Mammary epithelial cell (primary cell): ENCODE measurements at regions of chr20 and their contacts with region 1.

Region 1: GRCh38 chr20:6636209-6637159 is 131.0 kb upstream of the BMP2 start:
- DNase-seq: peak; percentile 64
- H3K4me3 ChIP-seq: no peak overlapping the region
- H3K27ac ChIP-seq: no peak overlapping the region
- H3K4me1 ChIP-seq: peaks cover 16% of the 10 kb centered on the region
- H3K27me3 ChIP-seq: no peaks in the 10 kb centered on the region
- CTCF ChIP-seq: peak; percentile 65 to 74

Region 2: GRCh38 chr20:6265204-6265904 is 371.1 kb before region 1 on chr20:
- CTCF ChIA-PET with region 1: no interaction called
- dilution Hi-C with region 1: no loop called
- in situ Hi-C with region 1: no loop called
- intact Hi-C with region 1: loop called (anchors 1 kb)
- DNase-seq: peak; percentile 41
- H3K4me3 ChIP-seq: peak overlapping the region in 2 of 3 experiments; percentile 17 to 35
- H3K27ac ChIP-seq: peak overlapping the region; percentile 10
- H3K4me1 ChIP-seq: peaks cover 9% of the 10 kb centered on the region
- H3K27me3 ChIP-seq: no peaks in the 10 kb centered on the region
- CTCF ChIP-seq: peak; percentile 65 to 70

Region 3: DNA sequence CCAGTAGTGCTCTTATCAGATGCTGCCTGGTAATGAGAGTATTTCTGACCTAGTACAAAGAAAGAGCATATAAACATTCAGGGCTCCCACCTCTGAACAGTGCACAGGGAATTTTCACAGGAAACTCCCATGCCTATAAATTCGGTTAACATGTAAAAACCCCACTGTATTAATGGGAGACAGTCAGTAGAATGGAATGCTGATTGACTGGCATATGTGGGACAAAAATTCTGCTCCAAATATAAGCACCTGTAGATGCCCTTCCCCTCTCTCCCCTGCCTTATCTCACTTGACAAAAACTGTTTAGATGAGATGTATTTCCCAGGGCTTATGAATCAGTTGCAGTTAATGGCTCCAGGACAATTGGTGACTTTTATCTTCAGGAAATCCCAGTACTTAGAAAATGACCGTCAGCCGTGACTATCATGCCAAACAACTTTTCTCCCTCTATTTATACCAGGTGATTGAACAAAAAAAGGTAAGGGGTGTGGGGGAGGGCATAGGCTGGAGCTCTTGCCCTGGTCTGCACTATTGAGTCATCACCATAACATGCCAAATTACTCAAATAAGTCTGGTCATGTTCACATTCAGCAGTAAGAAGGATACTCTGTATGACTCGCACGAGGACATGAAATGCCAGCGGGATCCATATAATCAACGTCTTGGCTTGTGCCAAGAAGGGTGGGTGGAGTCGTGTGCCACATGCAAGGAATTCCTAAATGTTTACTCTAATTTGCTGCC is 45.4 kb before region 1 on chr20:
- CTCF ChIA-PET with region 1: no interaction called
- dilution Hi-C with region 1: no loop called
- in situ Hi-C with region 1: no loop called
- intact Hi-C with region 1: loop called (anchors 2 kb)
- DNase-seq: peak; percentile 99
- H3K4me3 ChIP-seq: no peak overlapping the region
- H3K27ac ChIP-seq: peak overlapping the region; percentile 96
- H3K4me1 ChIP-seq: peaks cover 22% of the 10 kb centered on the region
- H3K27me3 ChIP-seq: no peaks in the 10 kb centered on the region
- CTCF ChIP-seq: no peak

Region 4: GRCh38 chr20:6802227-6802626 is 165.7 kb after region 1 on chr20:
- CTCF ChIA-PET with region 1: no interaction called
- dilution Hi-C with region 1: loop called (anchors 5 kb)
- in situ Hi-C with region 1: no loop called
- intact Hi-C with region 1: no loop called
- DNase-seq: peak; percentile 36
- H3K4me3 ChIP-seq: no peak overlapping the region
- H3K27ac ChIP-seq: no peak overlapping the region
- H3K4me1 ChIP-seq: no peaks in the 10 kb centered on the region
- H3K27me3 ChIP-seq: no peaks in the 10 kb centered on the region
- CTCF ChIP-seq: no peak

Region 5: GRCh38 chr20:6940046-6940445 is 303.6 kb after region 1 on chr20:
- CTCF ChIA-PET with region 1: no interaction called
- dilution Hi-C with region 1: no loop called
- in situ Hi-C with region 1: loop called in 1 of 2 experiments (anchors 25 kb)
- intact Hi-C with region 1: no loop called
- DNase-seq: peak; percentile 1
- H3K4me3 ChIP-seq: no peak overlapping the region
- H3K27ac ChIP-seq: no peak overlapping the region
- H3K4me1 ChIP-seq: peaks cover 6% of the 10 kb centered on the region
- H3K27me3 ChIP-seq: no peaks in the 10 kb centered on the region
- CTCF ChIP-seq: peak; percentile 85 to 88

Region 6: GRCh38 chr20:7272512-7272911 is 636.0 kb after region 1 on chr20:
- CTCF ChIA-PET with region 1: no interaction called
- dilution Hi-C with region 1: no loop called
- in situ Hi-C with region 1: no loop called
- intact Hi-C with region 1: loop called (anchors 5 kb)
- DNase-seq: no peak
- H3K4me3 ChIP-seq: no peak overlapping the region
- H3K27ac ChIP-seq: no peak overlapping the region
- H3K4me1 ChIP-seq: no peaks in the 10 kb centered on the region
- H3K27me3 ChIP-seq: no peaks in the 10 kb centered on the region
- CTCF ChIP-seq: peak; percentile 10 to 44